ENCODE measurements at regions of chr1 and their contacts with region 1.

Region 1: DNA sequence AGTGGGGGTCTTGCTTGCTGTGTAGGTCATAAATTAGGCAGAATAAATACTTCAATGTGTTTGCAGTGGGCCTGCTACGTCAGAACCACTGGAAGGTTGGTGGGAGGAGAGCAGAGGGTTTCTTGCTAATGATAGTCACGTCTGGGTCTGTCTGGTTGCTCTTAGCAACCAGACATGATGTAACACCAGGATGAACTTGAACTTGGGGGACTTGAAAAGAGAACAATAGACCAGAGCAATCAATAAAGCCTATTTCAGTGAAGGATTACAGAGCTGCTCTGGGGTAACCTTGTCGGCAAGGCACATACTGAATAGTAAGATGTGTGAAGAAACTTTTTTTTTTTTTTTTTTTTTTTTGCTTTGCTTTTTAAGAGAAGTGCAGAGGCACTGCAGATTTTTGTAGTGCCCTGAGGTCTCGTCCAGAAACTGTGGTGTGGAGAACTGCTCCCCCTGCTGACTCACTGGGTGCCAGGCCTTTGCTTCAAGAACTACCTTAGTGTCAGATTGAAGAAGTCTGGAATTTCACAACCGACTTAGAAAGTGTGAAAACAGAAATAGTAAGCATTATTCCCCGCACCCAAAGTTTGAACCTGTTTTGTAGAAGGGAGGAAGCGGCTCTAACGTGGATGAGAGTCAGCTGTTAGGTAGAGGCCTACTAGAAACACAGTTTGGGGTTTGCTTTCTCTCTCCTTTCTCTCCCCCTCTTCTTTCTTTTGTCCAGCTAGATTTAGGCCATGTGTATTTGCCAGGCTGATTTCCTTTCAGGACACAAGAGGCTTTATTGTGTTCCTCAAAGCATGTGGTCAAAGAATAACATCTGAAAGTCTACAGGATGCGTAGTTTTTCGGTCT is 271.6 kb downstream of the TM2D1 start:
- H3K4me3 Mint-ChIP-seq: no peak overlapping the region
- H3K27ac Mint-ChIP-seq: peak overlapping the region; percentile 19
- H3K4me1 Mint-ChIP-seq: peaks cover 43% of the 10 kb centered on the region
- H3K27me3 Mint-ChIP-seq: no peaks in the 10 kb centered on the region

Region 2: GRCh38 chr1:60848583-60849188 is 604.6 kb before region 1 on chr1:
- intact Hi-C with region 1: loop called (anchors 5 kb)
- H3K4me3 Mint-ChIP-seq: no peak overlapping the region
- H3K27ac Mint-ChIP-seq: no peak overlapping the region
- H3K4me1 Mint-ChIP-seq: no peaks in the 10 kb centered on the region
- H3K27me3 Mint-ChIP-seq: no peaks in the 10 kb centered on the region

Region 3: DNA sequence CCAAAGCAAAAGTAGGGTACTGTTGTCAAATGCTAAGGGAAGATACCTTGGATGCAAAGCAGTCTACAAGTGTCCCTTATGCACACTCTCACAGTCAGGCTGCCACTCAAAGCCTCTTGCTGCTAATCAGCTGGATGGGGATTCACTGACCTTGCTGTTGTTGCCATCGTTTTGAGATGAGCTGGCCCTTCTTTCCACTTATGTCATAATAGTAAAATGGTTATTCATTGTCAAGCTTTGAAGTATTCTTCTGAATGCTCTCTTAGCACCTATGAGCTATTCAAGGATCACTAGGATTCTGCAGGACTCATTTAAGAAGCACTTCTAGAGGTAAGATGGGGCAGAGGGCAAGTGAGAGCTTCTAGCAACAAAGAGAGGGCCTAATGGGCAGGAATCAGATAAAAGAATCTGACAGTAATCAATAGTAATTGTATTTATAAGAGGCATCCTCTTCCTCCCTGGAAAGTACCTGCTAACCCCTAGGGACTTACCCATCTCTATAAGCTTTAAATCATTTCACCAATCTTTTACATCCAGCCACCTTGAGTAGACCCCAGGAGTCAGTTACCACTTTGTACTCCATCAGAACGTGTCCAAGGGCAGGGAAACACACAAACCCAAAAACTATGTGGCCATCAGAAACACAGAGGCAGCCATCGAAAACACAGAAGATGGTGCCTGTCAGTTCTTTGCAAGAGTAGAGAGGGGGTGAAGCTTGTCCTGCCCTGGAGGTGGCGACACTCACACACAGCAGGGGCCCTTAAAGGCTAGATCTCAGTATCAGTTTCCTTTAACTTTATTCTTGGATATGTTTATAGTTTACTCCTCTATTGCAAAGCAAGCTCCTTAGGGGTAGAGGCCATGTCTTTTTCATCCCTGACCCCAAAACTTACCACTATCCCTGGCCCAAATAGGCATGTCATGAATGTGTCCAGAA is 474.6 kb before region 1 on chr1:
- intact Hi-C with region 1: loop called (anchors 5 kb)
- H3K4me3 Mint-ChIP-seq: no peak overlapping the region
- H3K27ac Mint-ChIP-seq: no peak overlapping the region
- H3K4me1 Mint-ChIP-seq: no peaks in the 10 kb centered on the region
- H3K27me3 Mint-ChIP-seq: no peaks in the 10 kb centered on the region

Region 4: GRCh38 chr1:61472876-61473275 is 19.5 kb after region 1 on chr1:
- intact Hi-C with region 1: no loop called
- H3K4me3 Mint-ChIP-seq: no peak overlapping the region
- H3K27ac Mint-ChIP-seq: no peak overlapping the region
- H3K4me1 Mint-ChIP-seq: no peaks in the 10 kb centered on the region
- H3K27me3 Mint-ChIP-seq: no peaks in the 10 kb centered on the region

Region 5: GRCh38 chr1:61486783-61487505 is 33.6 kb after region 1 on chr1:
- intact Hi-C with region 1: no loop called
- H3K4me3 Mint-ChIP-seq: no peak overlapping the region
- H3K27ac Mint-ChIP-seq: no peak overlapping the region
- H3K4me1 Mint-ChIP-seq: peaks cover 19% of the 10 kb centered on the region
- H3K27me3 Mint-ChIP-seq: no peaks in the 10 kb centered on the region

Region 6: DNA sequence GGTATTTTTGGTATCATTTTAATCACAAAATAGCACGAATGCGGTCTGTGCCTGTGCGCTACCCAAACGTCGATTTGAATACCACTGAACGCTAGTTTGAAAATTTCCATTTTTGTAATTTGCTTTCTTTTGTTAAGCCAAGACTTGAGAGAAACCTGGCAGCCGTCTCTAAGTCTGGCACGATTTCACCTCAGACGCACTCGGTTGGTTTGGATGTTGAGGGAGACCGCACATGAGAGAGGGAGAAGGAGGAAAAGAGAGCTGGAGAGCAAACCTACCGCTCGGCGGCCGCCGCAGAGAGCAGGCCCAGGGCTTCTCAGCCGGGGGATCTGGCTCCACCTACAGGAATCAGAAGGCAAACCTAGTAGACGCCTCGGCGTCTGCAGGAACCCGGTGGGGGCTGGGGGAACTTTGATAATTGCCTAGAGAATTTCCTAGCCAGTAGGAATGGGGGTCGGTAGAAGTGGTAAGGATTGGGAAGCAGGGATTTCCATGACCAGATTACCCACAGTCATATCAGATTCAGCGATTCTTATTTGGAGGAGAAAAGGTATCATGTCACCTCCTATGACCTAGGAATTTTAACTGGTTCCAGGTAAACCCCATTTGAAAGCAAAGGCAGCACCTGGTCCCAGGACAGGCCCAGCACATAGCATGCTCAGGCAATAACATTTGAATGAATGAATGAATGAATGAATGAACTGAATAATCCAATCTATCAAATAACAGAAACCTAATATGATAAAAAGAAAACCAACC is 188.4 kb after region 1 on chr1:
- intact Hi-C with region 1: loop called (anchors 5 kb)
- H3K4me3 Mint-ChIP-seq: peak overlapping the region; percentile 76
- H3K27ac Mint-ChIP-seq: peak overlapping the region; percentile 95
- H3K4me1 Mint-ChIP-seq: peaks cover 43% of the 10 kb centered on the region
- H3K27me3 Mint-ChIP-seq: peaks cover 3% of the 10 kb centered on the region

Measured in dendritic cell treated with granulocyte-macrophage colony-stimulating factor and Interleukin-4, amounts not matched to agents 40 ng/mL and 50 ng/mL, for 4 days (primary cell).